ENCODE measurements at regions of chr19 and their contacts with region 1.

Region 1: DNA sequence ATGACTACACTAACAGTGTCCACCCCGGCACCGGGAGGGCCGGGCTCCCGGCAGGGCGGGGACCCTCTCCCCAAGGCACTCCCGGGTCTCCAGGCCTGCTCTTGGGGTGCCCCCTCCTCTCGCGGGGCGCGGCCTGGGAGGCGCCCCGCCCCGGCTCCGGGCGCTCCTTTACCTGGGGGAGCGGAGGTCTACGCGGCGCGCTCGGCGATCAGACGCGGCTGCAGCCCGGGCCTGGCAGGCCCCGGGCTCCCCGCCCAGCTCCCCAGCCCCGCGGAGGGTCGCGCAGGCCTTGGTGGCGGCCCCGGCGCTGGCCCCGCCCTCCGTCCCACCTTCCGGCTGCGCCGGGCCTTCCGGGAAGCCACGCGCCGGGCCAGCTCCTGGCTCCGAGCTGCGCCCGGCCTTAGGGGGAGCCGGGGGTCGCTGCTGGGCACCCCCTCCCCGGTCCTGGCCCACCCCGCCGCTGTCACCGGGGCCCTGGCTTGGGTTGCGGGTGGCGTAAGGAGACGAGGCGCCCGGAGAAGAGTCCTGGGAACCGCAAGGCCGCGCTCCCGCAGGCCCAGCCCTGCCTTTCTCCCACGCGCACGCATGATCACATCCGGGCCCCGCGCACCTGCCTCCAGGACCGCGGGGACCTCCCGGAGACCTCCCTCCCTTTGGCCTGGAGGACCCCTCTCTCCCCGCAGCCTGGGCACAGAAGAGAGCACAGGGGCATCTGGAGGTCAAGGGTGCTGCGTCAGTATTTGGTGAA is at the start of gene C19orf12:
- DNase-seq: peak; percentile 75 to 91 (median 82)
- H3K4me3 ChIP-seq: peak within 1 kb of the TSS; percentile 66 to 83 (median 75)
- H3K27ac ChIP-seq: peak within 1 kb of the TSS; percentile 92 to 94
- H3K4me1 ChIP-seq: peaks cover 0 to 25% (median 16%) of the 10 kb centered on the region in 3 donors
- H3K27me3 ChIP-seq: no peaks in the 10 kb centered on the region
- CTCF ChIP-seq: no peak
- total RNA-seq, gene C19orf12: 21.2 TPM

Region 2: GRCh38 chr19:29610563-29611271 is 104.4 kb before region 1 on chr19:
- intact Hi-C with region 1: loop called (anchors 10 kb)
- DNase-seq: peak; percentile 89 to 92 (median 90)
- H3K4me3 ChIP-seq: no peak overlapping the region
- H3K27ac ChIP-seq: no peak overlapping the region
- H3K4me1 ChIP-seq: peaks cover 0 to 8% (median 0%) of the 10 kb centered on the region in 3 donors
- H3K27me3 ChIP-seq: no peaks in the 10 kb centered on the region
- CTCF ChIP-seq: peak; percentile 77